Left cardiac atrium (tissue), 4 donors: ENCODE measurements at regions of chr6 and their contacts with region 1.

Region 1: GRCh38 chr6:110815217-110816109 is at the start of gene CDK19:
- DNase-seq: peak; percentile 99
- ATAC-seq: peak; percentile 96 to 97
- total RNA-seq, gene CDK19: 7.4 to 9.6 TPM

Region 2: DNA sequence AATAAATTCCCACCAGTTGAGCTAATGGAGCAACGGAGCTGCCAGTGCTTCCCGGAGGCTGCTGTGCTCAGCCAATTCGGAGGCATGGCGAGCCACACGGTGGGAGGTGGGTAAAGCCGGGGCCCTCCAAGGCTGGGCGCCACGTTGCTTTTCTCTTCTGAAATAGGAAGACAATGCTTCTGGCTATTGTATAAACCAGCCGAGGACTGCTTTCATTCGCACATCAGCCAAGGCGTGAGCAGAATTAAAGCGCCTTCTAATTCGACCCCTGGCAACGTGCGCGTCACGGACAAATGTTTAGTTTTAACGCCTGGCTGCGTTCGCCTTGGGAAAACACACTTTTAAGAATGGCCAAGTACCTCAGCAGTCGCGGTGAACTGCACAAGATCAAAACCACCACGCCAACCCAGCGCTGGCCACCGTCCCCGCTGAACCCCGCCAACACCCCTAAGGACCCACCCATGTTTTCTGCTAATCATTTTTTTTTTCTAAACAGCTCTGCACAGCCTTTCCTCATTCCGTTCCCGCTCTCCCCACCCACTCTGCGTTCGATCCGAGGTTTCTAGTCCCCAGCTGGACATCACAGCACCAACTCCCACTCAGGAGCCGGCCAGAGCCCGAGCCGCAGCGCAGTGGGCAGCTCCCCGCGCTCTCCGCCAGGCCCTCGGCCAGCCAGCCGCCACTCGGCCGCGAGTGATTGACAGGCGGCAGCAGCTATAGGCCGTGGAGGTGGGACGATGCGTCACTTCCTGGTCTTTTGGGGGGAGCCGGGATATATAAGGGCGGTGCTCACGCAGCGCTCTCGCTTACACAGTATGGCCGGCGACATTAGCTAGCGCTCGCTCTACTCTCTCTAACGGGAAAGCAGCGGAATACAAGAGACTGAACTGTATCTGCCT is 58.8 kb after region 1 on chr6 and contains the start of gene AMD1:
- intact Hi-C with region 1: loop called in 1 of 2 experiments (anchors 5 kb)
- DNase-seq: peak; percentile 98
- ATAC-seq: peak; percentile 86 to 91
- total RNA-seq, gene AMD1: 38.6 to 62.4 TPM